Heart left ventricle (tissue), 16 donors: ENCODE measurements at regions of chr7 and their contacts with region 1.

Region 1: GRCh38 chr7:66844552-66845378 is 76.3 kb upstream of the TMEM248 start:
- DNase-seq: peak; percentile 98 to 100 (median 99)
- ATAC-seq: peak; percentile 97 to 100 (median 99)
- H3K4me3 ChIP-seq: peak overlapping the region; percentile 58 to 94 (median 82)
- H3K27ac ChIP-seq: peak overlapping the region; percentile 83 to 97 (median 90)
- H3K4me1 ChIP-seq: peaks cover 0 to 19% (median 9%) of the 10 kb centered on the region in 12 donors
- H3K27me3 ChIP-seq: no peaks in the 10 kb centered on the region
- CTCF ChIP-seq: peak in 3 of 12 donors; percentile 13 to 24 (median 23)
- POLR2A ChIP-seq: peak; percentile 73 to 97

Region 2: DNA sequence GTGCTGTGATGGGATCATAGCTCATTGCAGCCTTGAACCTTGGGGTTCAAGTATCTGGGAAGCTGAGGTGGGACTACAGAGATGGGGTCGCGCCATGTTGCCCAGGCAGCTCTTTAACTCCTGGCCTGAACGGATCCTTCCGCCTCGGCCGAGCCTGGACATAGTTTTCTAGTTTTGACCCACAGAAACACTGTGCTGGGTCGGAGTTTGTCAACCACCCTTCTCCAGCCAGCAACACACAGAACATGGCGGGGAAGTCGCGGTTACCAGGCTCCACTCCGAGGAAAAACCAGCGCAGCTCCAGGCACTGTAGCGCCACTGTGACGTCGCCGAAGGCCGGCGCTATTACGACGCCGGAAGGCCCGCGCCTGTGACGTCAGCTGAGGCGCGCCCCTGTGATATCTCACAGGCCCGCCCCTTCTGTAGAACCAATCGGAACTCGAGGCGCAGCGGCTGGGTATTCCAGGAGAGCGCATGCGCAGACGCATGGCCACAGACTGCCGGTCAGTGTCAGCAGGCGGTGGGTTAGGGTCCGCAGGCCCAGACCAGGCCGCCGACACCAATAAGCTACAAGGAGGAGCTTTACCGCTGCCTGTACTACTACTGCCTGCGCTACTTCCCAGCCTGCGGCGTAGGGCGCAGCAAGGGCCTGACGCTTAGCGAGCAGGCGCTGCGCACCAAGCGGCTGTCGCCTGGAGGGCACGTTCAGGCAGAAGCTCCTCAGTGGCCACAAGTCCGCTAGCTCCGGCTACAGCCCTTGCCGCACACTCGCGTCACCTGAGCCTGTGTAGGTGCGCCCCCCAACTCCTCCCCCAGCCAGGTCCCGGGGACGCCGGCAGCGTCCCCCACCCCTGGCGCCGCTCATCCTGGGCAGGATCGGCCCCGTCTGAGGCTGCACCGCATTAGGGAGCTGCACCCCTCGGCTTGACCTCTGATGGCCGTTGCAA is 351.3 kb before region 1 on chr7:
- intact Hi-C with region 1: loop called in 1 of 10 experiments (anchors 10 kb)
- DNase-seq: peak; percentile 98 to 99 (median 98)
- ATAC-seq: peak; percentile 98 to 99 (median 98)
- H3K4me3 ChIP-seq: peak overlapping the region; percentile 33 to 93 (median 68)
- H3K27ac ChIP-seq: peak overlapping the region; percentile 81 to 97 (median 92)
- H3K4me1 ChIP-seq: peaks cover 0 to 21% (median 10%) of the 10 kb centered on the region in 12 donors
- H3K27me3 ChIP-seq: no peaks in the 10 kb centered on the region
- CTCF ChIP-seq: peak in 7 of 12 donors; percentile 13 to 40 (median 23)
- POLR2A ChIP-seq: peak; percentile 65 to 97

Region 3: DNA sequence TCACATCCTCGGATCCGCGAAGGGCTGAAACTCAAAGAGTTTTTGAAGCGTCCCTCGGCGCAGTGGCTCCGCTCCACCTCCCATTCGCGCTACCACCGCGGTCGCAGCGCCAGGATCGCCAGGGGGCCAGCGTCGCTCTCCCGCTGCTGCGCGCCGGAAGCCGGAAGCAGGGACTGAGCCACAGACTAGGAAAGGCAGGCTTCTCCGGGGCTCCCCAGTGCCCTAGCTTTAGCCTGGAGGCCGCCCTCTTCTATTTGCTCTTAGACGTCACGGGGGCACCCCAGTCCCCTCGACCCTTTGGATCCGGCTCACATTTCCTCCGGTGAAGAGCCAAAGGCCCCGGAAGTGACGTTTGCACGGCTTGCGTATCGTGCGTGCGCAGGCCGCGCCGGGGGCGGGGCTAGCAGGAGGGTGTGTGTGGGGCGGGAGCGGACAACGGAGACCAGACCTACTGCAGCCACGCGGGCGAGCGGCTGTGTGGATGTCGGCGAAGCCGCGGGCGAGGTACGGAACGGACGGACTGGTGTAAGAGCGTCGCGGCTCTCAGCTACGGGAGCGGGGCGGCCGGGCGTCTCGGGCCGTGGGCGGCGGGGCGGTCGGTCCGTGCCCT is 190.5 kb before region 1 on chr7:
- intact Hi-C with region 1: loop called in 1 of 10 experiments (anchors 10 kb)
- DNase-seq: peak; percentile 97 to 99 (median 98)
- ATAC-seq: peak; percentile 98 to 99 (median 98)
- H3K4me3 ChIP-seq: peak overlapping the region; percentile 53 to 98 (median 78)
- H3K27ac ChIP-seq: peak overlapping the region; percentile 90 to 100 (median 98)
- H3K4me1 ChIP-seq: peaks cover 0 to 23% (median 11%) of the 10 kb centered on the region in 12 donors
- H3K27me3 ChIP-seq: no peaks in the 10 kb centered on the region
- CTCF ChIP-seq: peak in 8 of 12 donors; percentile 14 to 52 (median 37)
- POLR2A ChIP-seq: peak; percentile 69 to 97

Region 4: GRCh38 chr7:66681491-66682349 is 163.0 kb before region 1 on chr7:
- intact Hi-C with region 1: loop called in 1 of 10 experiments (anchors 10 kb)
- DNase-seq: peak; percentile 97 to 98 (median 98)
- ATAC-seq: peak; percentile 99 to 100 (median 99)
- H3K4me3 ChIP-seq: peak overlapping the region; percentile 66 to 98 (median 92)
- H3K27ac ChIP-seq: peak overlapping the region; percentile 87 to 99 (median 96)
- H3K4me1 ChIP-seq: peaks cover 0 to 33% (median 13%) of the 10 kb centered on the region in 12 donors
- H3K27me3 ChIP-seq: no peaks in the 10 kb centered on the region
- CTCF ChIP-seq: no peak
- POLR2A ChIP-seq: peak; percentile 74 to 94

Region 5: DNA sequence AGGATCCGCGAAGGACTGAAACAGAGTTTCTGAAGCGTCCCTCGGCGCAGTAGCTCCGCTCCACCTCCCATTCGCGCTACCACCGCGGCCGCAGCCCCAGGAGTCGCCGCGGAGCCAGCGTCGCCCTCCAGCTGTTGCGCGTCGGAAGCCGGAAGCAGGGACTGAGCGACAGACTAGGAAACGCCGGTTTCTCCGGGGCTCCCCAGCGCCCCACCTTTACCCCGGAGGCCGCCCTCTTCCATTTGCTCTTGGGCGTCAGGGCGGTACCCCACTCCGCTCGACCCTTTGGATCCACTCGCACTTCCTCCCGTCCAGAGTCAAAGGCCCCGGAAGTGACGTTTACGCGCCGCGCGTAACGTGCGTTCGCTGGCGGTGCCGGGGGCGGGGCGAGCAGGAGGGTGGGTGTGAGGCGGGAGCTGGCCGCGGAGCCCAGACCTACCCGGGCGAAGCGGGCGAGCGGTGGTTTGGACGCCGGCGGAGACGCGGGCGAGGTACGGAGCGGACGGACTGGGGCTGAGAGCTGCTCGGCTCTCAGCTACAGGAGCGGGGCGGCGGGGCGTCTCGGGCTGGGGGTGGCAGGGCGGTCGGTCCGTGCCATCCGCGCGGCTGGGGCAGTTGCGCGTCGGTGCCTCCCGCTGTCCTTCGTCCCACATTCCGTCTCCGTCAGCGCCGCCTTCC is 104.3 kb before region 1 on chr7 and contains the start of gene RABGEF1:
- intact Hi-C with region 1: loop called in 3 of 10 experiments (anchors 2 to 10 kb)
- DNase-seq: peak; percentile 98 to 99 (median 99)
- ATAC-seq: peak; percentile 97 to 99 (median 97)
- H3K4me3 ChIP-seq: peak within 1 kb of the TSS; percentile 65 to 100 (median 96)
- H3K27ac ChIP-seq: peak within 1 kb of the TSS; percentile 88 to 100 (median 94)
- H3K4me1 ChIP-seq: peaks cover 0 to 35% (median 15%) of the 10 kb centered on the region in 12 donors
- H3K27me3 ChIP-seq: no peaks in the 10 kb centered on the region
- CTCF ChIP-seq: peak in 2 of 12 donors; percentile 9 to 18
- POLR2A ChIP-seq: peak; percentile 41 to 92
- total RNA-seq, gene RABGEF1: 14.8 to 21.2 (median 19.6) TPM

Region 6: GRCh38 chr7:66920769-66921395 is 76.1 kb after region 1 on chr7 and contains the start of gene TMEM248:
- intact Hi-C with region 1: loop called in 3 of 10 experiments (anchors 1 to 10 kb)
- DNase-seq: peak; percentile 91 to 96 (median 92)
- ATAC-seq: peak; percentile 94 to 98 (median 98)
- H3K4me3 ChIP-seq: peak within 1 kb of the TSS; percentile 90 to 100 (median 96)
- H3K27ac ChIP-seq: peak within 1 kb of the TSS; percentile 17 to 87 (median 77)
- H3K4me1 ChIP-seq: peaks cover 3 to 40% (median 26%) of the 10 kb centered on the region in 12 donors
- H3K27me3 ChIP-seq: no peaks in the 10 kb centered on the region
- CTCF ChIP-seq: no peak
- POLR2A ChIP-seq: peak in 1 of 2 donors; percentile 40
- total RNA-seq, gene TMEM248: 34.6 to 121 (median 55.2) TPM